CD4-positive, alpha-beta memory T cell (primary cell): ENCODE measurements at regions of chr5 and their contacts with region 1.

Region 1: GRCh38 chr5:132064738-132065331 is 4.4 kb downstream of the IL3 start:
- DNase-seq: peak; percentile 59 to 71 (median 67)
- H3K4me3 ChIP-seq: no peak overlapping the region
- H3K4me3 Mint-ChIP-seq: no peak overlapping the region
- H3K27ac ChIP-seq: no peak overlapping the region
- H3K27ac Mint-ChIP-seq: peak overlapping the region in 5 of 7 donors; percentile 7 to 84 (median 47)
- H3K4me1 ChIP-seq: peaks cover 22% of the 10 kb centered on the region
- H3K4me1 Mint-ChIP-seq: peaks cover 14 to 54% (median 33%) of the 10 kb centered on the region in 4 donors
- H3K27me3 ChIP-seq: no peaks in the 10 kb centered on the region
- H3K27me3 Mint-ChIP-seq: no peaks in the 10 kb centered on the region

Region 2: DNA sequence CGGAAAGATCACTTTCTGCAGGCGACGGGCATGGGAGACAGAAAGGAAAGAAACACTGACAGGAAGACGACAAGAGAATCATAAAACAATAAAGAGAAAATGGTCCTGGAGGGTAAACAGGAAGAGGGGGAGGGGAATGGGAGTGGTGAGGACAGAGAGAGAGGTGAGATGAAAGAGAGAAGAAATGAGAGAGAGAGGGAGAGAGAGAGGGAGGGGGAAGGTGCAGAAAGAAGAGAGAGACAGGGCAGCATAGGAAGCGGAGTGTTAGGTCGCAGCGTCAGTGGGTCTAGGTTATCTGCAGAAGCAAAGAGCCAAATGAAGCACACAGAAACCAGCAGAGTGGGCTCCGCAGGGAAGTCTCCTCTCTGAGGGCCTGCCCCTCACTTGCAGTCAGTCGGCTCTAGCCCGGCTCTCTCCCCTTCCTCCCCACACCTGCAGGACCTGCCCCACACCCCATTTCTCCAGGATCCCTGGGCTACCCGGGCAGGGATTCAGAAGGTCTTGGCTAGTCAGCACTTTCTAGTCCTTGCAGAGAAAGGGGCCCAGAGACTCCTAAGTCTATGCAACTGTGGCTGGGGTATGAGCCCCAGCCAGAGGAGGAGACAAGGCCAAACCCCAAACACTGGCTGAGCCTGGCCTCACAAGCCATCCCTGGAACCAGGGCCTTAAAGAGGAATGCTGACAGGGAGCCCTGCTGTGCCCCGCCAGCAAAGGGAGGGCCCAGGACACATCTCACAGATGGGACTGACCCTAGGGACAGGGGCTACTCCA is 89.7 kb before region 1 on chr5:
- CTCF ChIA-PET with region 1: interaction called, 11 read pairs
- POLR2A ChIA-PET with region 1: no interaction called
- intact Hi-C with region 1: no loop called
- DNase-seq: peak; percentile 41 to 55 (median 48)
- H3K4me3 ChIP-seq: peak overlapping the region; percentile 48 to 53
- H3K4me3 Mint-ChIP-seq: peak overlapping the region; percentile 85 to 96 (median 90)
- H3K27ac ChIP-seq: peak overlapping the region; percentile 61
- H3K27ac Mint-ChIP-seq: peak overlapping the region; percentile 87 to 98 (median 96)
- H3K4me1 ChIP-seq: peaks cover 55% of the 10 kb centered on the region
- H3K4me1 Mint-ChIP-seq: peaks cover 44 to 76% (median 63%) of the 10 kb centered on the region in 4 donors
- H3K27me3 ChIP-seq: no peaks in the 10 kb centered on the region
- H3K27me3 Mint-ChIP-seq: no peaks in the 10 kb centered on the region

Region 3: GRCh38 chr5:132103332-132103951 is 38.6 kb after region 1 on chr5:
- CTCF ChIA-PET with region 1: interaction called, 13 read pairs
- POLR2A ChIA-PET with region 1: interaction called, 3 read pairs
- intact Hi-C with region 1: loop called (anchors 1 kb)
- DNase-seq: peak; percentile 81 to 93 (median 86)
- H3K4me3 ChIP-seq: peak overlapping the region; percentile 33 to 40
- H3K4me3 Mint-ChIP-seq: peak overlapping the region; percentile 46 to 74 (median 70)
- H3K27ac ChIP-seq: peak overlapping the region; percentile 80
- H3K27ac Mint-ChIP-seq: peak overlapping the region; percentile 88 to 99 (median 94)
- H3K4me1 ChIP-seq: peaks cover 77% of the 10 kb centered on the region
- H3K4me1 Mint-ChIP-seq: peaks cover 61 to 86% (median 74%) of the 10 kb centered on the region in 4 donors
- H3K27me3 ChIP-seq: no peaks in the 10 kb centered on the region
- H3K27me3 Mint-ChIP-seq: no peaks in the 10 kb centered on the region

Region 4: GRCh38 chr5:132142459-132142858 is 77.6 kb after region 1 on chr5:
- CTCF ChIA-PET with region 1: interaction called, 22 read pairs
- POLR2A ChIA-PET with region 1: no interaction called
- intact Hi-C with region 1: no loop called
- DNase-seq: no peak
- H3K4me3 ChIP-seq: no peak overlapping the region
- H3K4me3 Mint-ChIP-seq: no peak overlapping the region
- H3K27ac ChIP-seq: no peak overlapping the region
- H3K27ac Mint-ChIP-seq: no peak overlapping the region
- H3K4me1 ChIP-seq: no peaks in the 10 kb centered on the region
- H3K4me1 Mint-ChIP-seq: no peaks in the 10 kb centered on the region
- H3K27me3 ChIP-seq: no peaks in the 10 kb centered on the region
- H3K27me3 Mint-ChIP-seq: peaks cover 3 to 6% of the 10 kb centered on the region in 2 donors

Region 5: DNA sequence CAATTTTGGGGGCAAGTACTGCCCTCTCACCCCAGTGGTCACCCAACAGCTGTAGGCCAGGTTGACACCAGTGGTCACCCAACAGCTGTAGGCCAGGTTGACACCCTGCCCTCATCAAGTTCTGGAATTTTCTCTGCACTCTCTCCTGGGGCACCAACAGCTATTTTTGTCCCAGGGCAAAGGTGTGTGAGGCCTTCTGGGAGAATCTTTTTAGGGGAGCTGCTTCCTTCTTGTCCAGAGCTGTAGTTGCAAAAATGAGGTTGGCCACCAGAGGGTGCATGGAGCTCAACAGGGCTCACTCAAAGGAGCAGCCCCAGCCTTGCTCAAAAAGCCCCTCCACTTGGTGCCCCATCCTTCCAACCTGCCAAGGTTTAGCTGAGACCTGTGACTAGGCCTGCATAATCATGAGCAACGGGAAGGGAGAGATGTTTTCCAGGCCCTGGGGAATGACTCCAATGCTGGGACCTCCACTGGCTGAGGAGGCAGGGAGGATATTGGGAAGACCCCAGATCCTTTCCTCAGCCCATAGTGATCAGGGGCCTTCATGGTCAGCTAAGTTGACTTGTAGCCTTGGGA is 173.4 kb after region 1 on chr5:
- CTCF ChIA-PET with region 1: interaction called, 13 read pairs
- POLR2A ChIA-PET with region 1: no interaction called
- intact Hi-C with region 1: loop called (anchors 2 kb)
- DNase-seq: peak; percentile 40 to 57 (median 52)
- H3K4me3 ChIP-seq: no peak overlapping the region
- H3K4me3 Mint-ChIP-seq: no peak overlapping the region
- H3K27ac ChIP-seq: no peak overlapping the region
- H3K27ac Mint-ChIP-seq: no peak overlapping the region
- H3K4me1 ChIP-seq: no peaks in the 10 kb centered on the region
- H3K4me1 Mint-ChIP-seq: no peaks in the 10 kb centered on the region
- H3K27me3 ChIP-seq: no peaks in the 10 kb centered on the region
- H3K27me3 Mint-ChIP-seq: peaks cover 7% of the 10 kb centered on the region in 2 donors